ENCODE measurements at regions of chr13 and their contacts with region 1.

Region 1: GRCh38 chr13:99959538-99960230 is 11.9 kb downstream of the ZIC5 start:
- DNase-seq: peak; percentile 53
- ATAC-seq: no peak
- H3K4me3 ChIP-seq: peak overlapping the region in 1 of 5 experiments; percentile 19
- H3K4me3 Mint-ChIP-seq: peak overlapping the region; percentile 57
- H3K27ac ChIP-seq: no peak overlapping the region
- H3K27ac Mint-ChIP-seq: no peak overlapping the region
- H3K4me1 ChIP-seq: peaks cover 28 to 52% of the 10 kb centered on the region in 2 donors
- H3K4me1 Mint-ChIP-seq: peaks cover 18% of the 10 kb centered on the region
- H3K27me3 ChIP-seq: peaks cover 2 to 76% (median 72%) of the 10 kb centered on the region in 4 experiments
- H3K27me3 Mint-ChIP-seq: peaks cover 77% of the 10 kb centered on the region
- CTCF ChIP-seq: no peak

Region 2: DNA sequence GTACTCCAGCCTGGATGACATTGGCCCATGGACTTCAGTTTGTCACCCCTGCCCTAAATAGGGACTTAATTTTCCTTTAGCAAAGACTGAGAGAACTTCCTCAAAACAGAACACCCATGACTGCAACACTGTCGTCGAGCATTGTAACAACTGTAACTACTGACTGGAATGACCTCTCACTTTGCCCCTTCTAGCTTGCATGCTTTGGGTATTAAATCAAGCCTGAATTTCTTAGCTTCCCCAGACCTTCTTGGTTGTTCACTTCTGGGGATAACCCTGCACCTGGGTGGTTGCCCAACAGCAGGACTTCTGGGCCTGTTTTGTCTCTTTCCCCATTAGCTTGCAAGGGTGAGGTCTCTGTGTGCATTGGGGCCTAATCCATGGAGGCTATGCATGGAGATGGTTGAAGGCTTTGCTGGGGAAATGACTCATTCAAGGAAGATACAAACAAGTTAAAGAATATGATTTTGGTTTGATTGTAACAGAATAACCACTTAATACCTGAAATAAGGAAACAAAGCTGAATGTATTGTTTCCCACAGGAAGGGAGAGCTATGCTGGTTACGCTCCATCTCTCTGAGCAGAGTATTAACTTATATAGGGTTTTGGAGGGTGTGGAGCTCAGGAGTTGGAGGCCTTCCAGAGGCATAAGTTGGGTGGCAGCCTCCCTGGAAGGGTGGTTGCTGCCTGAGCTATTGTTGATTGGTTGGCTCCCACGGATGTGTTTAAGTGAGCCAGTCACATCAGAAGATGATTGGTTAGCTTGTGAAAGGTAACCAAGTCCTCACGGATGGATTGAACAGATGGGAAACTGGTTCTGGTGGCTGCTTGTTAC is 793.7 kb before region 1 on chr13:
- CTCF ChIA-PET with region 1: no interaction called
- POLR2A ChIA-PET with region 1: no interaction called
- intact Hi-C with region 1: no loop called
- DNase-seq: no peak
- ATAC-seq: no peak
- H3K4me3 ChIP-seq: no peak overlapping the region
- H3K4me3 Mint-ChIP-seq: no peak overlapping the region
- H3K27ac ChIP-seq: no peak overlapping the region
- H3K27ac Mint-ChIP-seq: no peak overlapping the region
- H3K4me1 ChIP-seq: peaks cover 0 to 3% of the 10 kb centered on the region in 2 donors
- H3K4me1 Mint-ChIP-seq: peaks cover 7% of the 10 kb centered on the region
- H3K27me3 ChIP-seq: no peaks in the 10 kb centered on the region
- H3K27me3 Mint-ChIP-seq: no peaks in the 10 kb centered on the region
- CTCF ChIP-seq: no peak

Region 3: GRCh38 chr13:99995589-99996380 is 36.1 kb after region 1 on chr13:
- CTCF ChIA-PET with region 1: interaction called, 3 read pairs
- POLR2A ChIA-PET with region 1: no interaction called
- intact Hi-C with region 1: loop called (anchors 5 kb)
- DNase-seq: peak; percentile 52
- ATAC-seq: no peak
- H3K4me3 ChIP-seq: peak overlapping the region in 1 of 5 experiments; percentile 0
- H3K4me3 Mint-ChIP-seq: no peak overlapping the region
- H3K27ac ChIP-seq: no peak overlapping the region
- H3K27ac Mint-ChIP-seq: no peak overlapping the region
- H3K4me1 ChIP-seq: peaks cover 7 to 31% of the 10 kb centered on the region in 2 donors
- H3K4me1 Mint-ChIP-seq: peaks cover 2% of the 10 kb centered on the region
- H3K27me3 ChIP-seq: peaks cover 8 to 76% (median 65%) of the 10 kb centered on the region in 4 experiments
- H3K27me3 Mint-ChIP-seq: peaks cover 72% of the 10 kb centered on the region
- CTCF ChIP-seq: no peak